ENCODE measurements at regions of chr6 and their contacts with region 1.

Region 1: GRCh38 chr6:32529697-32530429 is at the start of gene HLA-DRB5:
- DNase-seq: no peak
- H3K4me3 ChIP-seq: peak within 1 kb of the TSS in 12 of 59 donors; percentile 12 to 50 (median 28)
- H3K27ac ChIP-seq: peak within 1 kb of the TSS in 3 of 59 donors; percentile 14 to 81 (median 17)
- H3K27me3 ChIP-seq: no peaks in the 10 kb centered on the region
- CTCF ChIP-seq: no peak
- total RNA-seq, gene HLA-DRB5: 0.39 to 78.9 (median 8.3) TPM in 111 of 120 experiments, not detected in the others

Region 2: GRCh38 chr6:32355018-32355417 is 174.8 kb before region 1 on chr6:
- intact Hi-C with region 1: no loop called
- DNase-seq: no peak
- H3K4me3 ChIP-seq: no peak overlapping the region
- H3K27ac ChIP-seq: no peak overlapping the region
- H3K27me3 ChIP-seq: no peaks in the 10 kb centered on the region
- CTCF ChIP-seq: no peak

Region 3: GRCh38 chr6:32424589-32425300 is 105.1 kb before region 1 on chr6:
- intact Hi-C with region 1: no loop called
- DNase-seq: no peak
- H3K4me3 ChIP-seq: no peak overlapping the region
- H3K27ac ChIP-seq: no peak overlapping the region
- H3K27me3 ChIP-seq: peaks cover 0 to 22% (median 8%) of the 10 kb centered on the region in 45 donors
- CTCF ChIP-seq: no peak

Region 4: GRCh38 chr6:32483968-32484636 is 45.8 kb before region 1 on chr6:
- intact Hi-C with region 1: loop called in 1 of 2 experiments (anchors 10 kb)
- DNase-seq: no peak
- H3K4me3 ChIP-seq: no peak overlapping the region
- H3K27ac ChIP-seq: no peak overlapping the region
- H3K27me3 ChIP-seq: peaks cover 0 to 12% (median 0%) of the 10 kb centered on the region in 45 donors
- CTCF ChIP-seq: no peak